ENCODE measurements at regions of chr16 and their contacts with region 1.

Region 1: GRCh38 chr16:4123616-4124265 is 7.5 kb upstream of the ADCY9 start:
- DNase-seq: no peak
- H3K4me3 ChIP-seq: no peak overlapping the region
- H3K27ac ChIP-seq: no peak overlapping the region
- H3K4me1 ChIP-seq: no peaks in the 10 kb centered on the region
- H3K27me3 ChIP-seq: no peaks in the 10 kb centered on the region
- CTCF ChIP-seq: no peak
- EP300 ChIP-seq: no peak
- POLR2A ChIP-seq: no peak

Region 2: DNA sequence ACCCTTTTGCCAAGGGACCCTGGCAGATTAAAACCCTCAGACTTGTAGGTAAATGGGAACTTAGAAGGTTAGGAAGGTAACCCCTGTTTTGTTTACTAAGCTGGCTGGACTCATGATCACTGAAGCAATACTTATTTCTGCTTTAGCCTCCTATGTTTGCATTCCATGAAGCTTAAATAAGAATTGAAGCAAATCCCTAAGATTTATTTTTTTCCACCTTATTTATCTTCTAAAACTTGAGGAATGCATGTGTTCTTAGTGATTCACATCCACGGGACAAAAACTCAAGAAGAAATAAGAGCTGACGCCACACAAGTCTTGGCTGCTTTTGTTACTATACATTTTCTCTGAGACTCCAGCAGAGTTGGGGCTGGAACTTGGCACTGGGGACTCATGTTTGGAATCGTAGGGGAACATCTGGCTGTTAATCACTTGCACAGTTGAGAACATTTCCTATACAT is 587.4 kb before region 1 on chr16:
- intact Hi-C with region 1: no loop called
- DNase-seq: no peak
- H3K4me3 ChIP-seq: no peak overlapping the region
- H3K27ac ChIP-seq: no peak overlapping the region
- H3K4me1 ChIP-seq: no peaks in the 10 kb centered on the region
- H3K27me3 ChIP-seq: no peaks in the 10 kb centered on the region
- CTCF ChIP-seq: no peak
- EP300 ChIP-seq: no peak
- POLR2A ChIP-seq: no peak

Region 3: DNA sequence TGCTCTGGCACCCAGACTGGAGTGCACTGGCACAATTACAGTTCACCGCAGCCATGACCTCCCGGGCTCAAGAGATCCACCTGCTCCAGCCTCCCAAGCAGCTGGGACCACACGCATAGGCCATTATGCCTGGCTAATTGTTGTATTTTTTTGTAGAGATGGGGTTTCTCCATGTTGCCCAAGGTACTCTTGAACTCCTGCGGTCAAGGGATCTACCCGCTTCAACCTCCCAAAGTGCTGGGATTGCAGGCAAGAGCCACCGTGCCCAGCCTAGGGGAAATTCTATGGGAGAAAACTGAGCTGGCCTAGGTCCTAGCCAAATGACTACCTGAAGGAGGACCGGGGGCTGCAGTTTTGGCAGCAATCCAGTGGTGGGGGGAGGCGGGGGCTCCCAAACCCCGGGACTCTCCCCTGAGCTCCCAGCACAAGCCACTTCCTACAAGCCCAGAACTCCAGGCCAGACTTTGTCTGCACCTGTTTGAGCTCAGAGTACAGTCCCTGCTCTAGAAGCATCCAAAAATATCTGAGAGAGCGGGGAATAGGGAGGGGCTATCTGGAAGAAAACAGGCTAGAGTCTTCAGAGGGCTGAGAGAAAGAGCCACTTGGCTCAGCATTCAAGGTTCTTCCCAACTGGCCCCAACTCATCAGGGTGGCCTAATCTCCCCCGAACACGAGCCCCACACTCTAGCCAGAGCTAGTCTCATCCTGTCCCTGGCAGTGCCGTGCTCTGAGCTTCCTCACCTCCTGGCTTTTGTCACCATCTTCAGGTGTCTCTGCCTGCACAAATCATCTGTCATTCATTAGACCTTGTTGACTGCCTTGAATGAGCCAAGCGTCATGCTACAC is 109.0 kb after region 1 on chr16:
- intact Hi-C with region 1: loop called in 1 of 4 experiments (anchors 10 kb)
- DNase-seq: no peak
- H3K4me3 ChIP-seq: no peak overlapping the region
- H3K27ac ChIP-seq: no peak overlapping the region
- H3K4me1 ChIP-seq: no peaks in the 10 kb centered on the region
- H3K27me3 ChIP-seq: no peaks in the 10 kb centered on the region
- CTCF ChIP-seq: no peak
- EP300 ChIP-seq: no peak
- POLR2A ChIP-seq: no peak

Measured in ovary (tissue), 10 donors.